ENCODE measurements at regions of chrX and their contacts with region 1.

Region 1: GRCh38 chrX:30851449-30851848 is 37.6 kb downstream of the TAB3 start:
- DNase-seq: no peak
- H3K4me3 ChIP-seq: no peak overlapping the region
- H3K27ac ChIP-seq: no peak overlapping the region
- H3K4me1 ChIP-seq: no peaks in the 10 kb centered on the region
- H3K27me3 ChIP-seq: no peaks in the 10 kb centered on the region
- CTCF ChIP-seq: no peak
- POLR2A ChIP-seq: no peak

Region 2: DNA sequence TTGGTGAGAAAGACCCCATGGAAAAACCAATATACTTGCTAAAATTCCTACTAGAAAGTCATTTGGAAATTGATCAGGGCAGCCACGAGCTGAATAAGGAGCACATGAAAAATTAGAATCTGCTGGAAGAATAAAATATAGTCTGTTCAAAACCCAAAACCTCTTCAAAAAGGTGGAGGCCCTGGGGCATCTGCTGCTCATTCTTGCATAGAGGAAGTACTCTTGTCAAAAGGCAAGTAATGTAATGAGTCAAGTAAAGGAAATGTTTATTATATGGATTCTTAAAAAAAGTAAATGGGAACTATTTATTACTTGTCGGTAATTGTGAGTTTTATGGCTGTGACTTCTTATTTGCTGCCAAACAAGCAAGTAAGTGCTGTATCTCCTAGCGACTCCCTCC is 88.7 kb before region 1 on chrX:
- intact Hi-C with region 1: no loop called
- DNase-seq: no peak
- H3K4me3 ChIP-seq: no peak overlapping the region
- H3K27ac ChIP-seq: no peak overlapping the region
- H3K4me1 ChIP-seq: no peaks in the 10 kb centered on the region
- H3K27me3 ChIP-seq: no peaks in the 10 kb centered on the region
- CTCF ChIP-seq: no peak
- POLR2A ChIP-seq: no peak

Region 3: DNA sequence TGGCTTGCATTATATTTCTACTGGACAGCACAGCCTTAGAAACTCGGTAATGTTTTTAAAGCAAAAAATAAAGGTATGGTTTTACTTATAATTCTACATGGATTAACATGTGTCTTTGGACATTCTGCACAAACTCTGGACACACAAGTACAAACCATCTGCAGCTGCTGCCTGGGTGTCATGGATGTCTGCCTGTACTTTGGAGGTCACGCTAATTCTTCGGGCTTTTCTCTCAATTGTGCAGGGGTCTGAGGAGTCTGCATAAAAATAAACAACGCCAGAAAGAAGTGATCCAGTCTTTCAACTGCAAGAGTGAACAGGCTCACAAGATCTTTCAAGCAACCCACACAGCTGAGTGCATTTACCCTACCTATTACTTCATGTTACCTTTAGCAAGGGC is 17.6 kb before region 1 on chrX:
- intact Hi-C with region 1: loop called (anchors 2 kb)
- DNase-seq: no peak
- H3K4me3 ChIP-seq: no peak overlapping the region
- H3K27ac ChIP-seq: no peak overlapping the region
- H3K4me1 ChIP-seq: no peaks in the 10 kb centered on the region
- H3K27me3 ChIP-seq: no peaks in the 10 kb centered on the region
- CTCF ChIP-seq: no peak
- POLR2A ChIP-seq: no peak

Region 4: GRCh38 chrX:30967516-30967915 is 116.1 kb after region 1 on chrX:
- intact Hi-C with region 1: no loop called
- DNase-seq: no peak
- H3K4me3 ChIP-seq: no peak overlapping the region
- H3K27ac ChIP-seq: no peak overlapping the region
- H3K4me1 ChIP-seq: no peaks in the 10 kb centered on the region
- H3K27me3 ChIP-seq: no peaks in the 10 kb centered on the region
- CTCF ChIP-seq: no peak
- POLR2A ChIP-seq: no peak

Region 5: GRCh38 chrX:31136144-31136611 is 284.7 kb after region 1 on chrX:
- intact Hi-C with region 1: no loop called
- DNase-seq: no peak
- H3K4me3 ChIP-seq: no peak overlapping the region
- H3K27ac ChIP-seq: no peak overlapping the region
- H3K4me1 ChIP-seq: no peaks in the 10 kb centered on the region
- H3K27me3 ChIP-seq: no peaks in the 10 kb centered on the region
- CTCF ChIP-seq: no peak
- POLR2A ChIP-seq: no peak

Measured in vagina (tissue), 2 donors.